Activated T-helper 2 cell treated with anti-CD3 and anti-CD28 coated beads, Interferon-gamma antibody, Interleukin-2, Interleukin-4, amounts not matched to agents 10 μg/mL and 5 μg/mL and 100 μg/mL, durations not matched to agents 14 hours and 24 hours and 36 hours (primary cell): ENCODE measurements at regions of chr9 and their contacts with region 1.

Region 1: GRCh38 chr9:4832786-4833579 is 40.2 kb downstream of the RCL1 start:
- DNase-seq: peak; percentile 27
- H3K4me3 Mint-ChIP-seq: no peak overlapping the region
- H3K27ac Mint-ChIP-seq: peak overlapping the region; percentile 93
- H3K4me1 Mint-ChIP-seq: peaks cover 47% of the 10 kb centered on the region
- H3K27me3 Mint-ChIP-seq: no peaks in the 10 kb centered on the region

Region 2: DNA sequence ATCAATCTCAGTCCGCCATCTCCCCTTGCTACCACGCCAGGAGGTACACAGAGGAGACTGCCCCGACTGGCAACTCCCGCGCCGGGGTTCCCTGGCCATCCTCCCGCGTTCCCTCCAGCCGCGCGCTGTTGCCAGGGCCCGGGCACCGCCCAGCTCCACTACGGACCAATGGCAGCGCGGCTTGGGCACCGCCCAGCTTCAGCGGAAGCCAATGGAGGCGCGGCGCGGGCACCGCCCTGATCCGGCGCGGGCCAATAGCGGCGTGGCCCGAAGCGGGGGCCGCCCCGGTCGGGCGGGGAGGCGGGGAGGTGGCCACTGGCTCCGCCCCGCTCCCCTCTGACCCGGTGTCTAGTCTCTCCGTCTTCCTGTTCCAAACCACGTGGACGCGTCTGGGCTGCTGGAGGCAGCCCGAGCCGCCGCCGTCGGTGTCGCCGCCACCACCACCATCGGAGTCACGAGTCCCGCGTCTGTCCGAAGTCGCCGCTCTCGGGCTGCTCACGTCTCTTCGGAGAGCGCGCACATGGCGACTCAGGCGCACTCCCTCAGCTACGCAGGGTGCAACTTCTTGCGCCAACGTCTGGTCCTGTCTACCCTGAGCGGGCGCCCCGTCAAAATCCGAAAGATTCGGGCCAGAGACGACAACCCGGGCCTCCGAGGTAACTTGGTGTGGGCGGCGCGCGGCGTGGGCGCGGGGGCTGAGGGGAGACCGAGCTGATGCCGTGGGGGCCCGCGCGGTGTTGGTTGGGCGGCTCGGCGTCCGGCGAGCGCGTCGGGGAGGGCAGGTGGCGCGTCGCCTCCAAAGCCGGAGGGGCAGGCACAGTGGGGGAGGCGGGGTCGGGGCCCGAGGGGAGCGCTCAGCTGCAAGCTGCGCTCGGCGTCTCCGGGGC is 40.2 kb before region 1 on chr9 and contains the start of gene RCL1:
- intact Hi-C with region 1: loop called (anchors 1 kb)
- DNase-seq: peak; percentile 97
- H3K4me3 Mint-ChIP-seq: peak within 1 kb of the TSS; percentile 93
- H3K27ac Mint-ChIP-seq: peak within 1 kb of the TSS; percentile 90
- H3K4me1 Mint-ChIP-seq: peaks cover 40% of the 10 kb centered on the region
- H3K27me3 Mint-ChIP-seq: peaks cover 2% of the 10 kb centered on the region
- total RNA-seq, gene RCL1: 34.5 and 36.3 TPM in 2 replicates

Region 3: GRCh38 chr9:4873066-4873465 is 40.1 kb after region 1 on chr9:
- intact Hi-C with region 1: no loop called
- DNase-seq: no peak
- H3K4me3 Mint-ChIP-seq: no peak overlapping the region
- H3K27ac Mint-ChIP-seq: no peak overlapping the region
- H3K4me1 Mint-ChIP-seq: peaks cover 14% of the 10 kb centered on the region
- H3K27me3 Mint-ChIP-seq: no peaks in the 10 kb centered on the region

Region 4: GRCh38 chr9:4923580-4924544 is 90.9 kb after region 1 on chr9:
- intact Hi-C with region 1: loop called (anchors 5 kb)
- DNase-seq: no peak
- H3K4me3 Mint-ChIP-seq: no peak overlapping the region
- H3K27ac Mint-ChIP-seq: peak overlapping the region; percentile 83
- H3K4me1 Mint-ChIP-seq: peaks cover 48% of the 10 kb centered on the region
- H3K27me3 Mint-ChIP-seq: no peaks in the 10 kb centered on the region

Region 5: DNA sequence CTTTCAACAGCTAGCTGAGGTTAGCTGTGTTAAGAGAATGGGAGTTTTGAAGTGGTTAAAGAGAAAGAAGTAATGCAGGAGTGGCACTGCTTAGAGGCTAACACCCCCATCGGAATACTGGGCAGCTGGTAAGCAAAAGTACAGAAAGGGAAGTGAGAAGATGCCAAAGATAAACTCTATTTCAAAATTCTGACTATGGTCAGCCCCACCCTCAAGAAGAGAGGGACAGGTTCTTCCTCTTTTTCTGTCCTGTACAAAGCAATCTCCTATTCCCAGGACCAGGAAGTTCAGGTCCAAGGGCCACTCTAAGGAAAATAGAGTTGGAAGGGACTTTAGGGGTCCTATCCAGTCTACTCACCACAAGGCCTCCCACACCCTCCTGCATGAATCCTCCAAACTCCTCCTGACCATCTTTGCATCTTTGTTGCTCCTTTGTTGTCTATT is 106.2 kb after region 1 on chr9:
- intact Hi-C with region 1: loop called (anchors 2 kb)
- DNase-seq: peak; percentile 39
- H3K4me3 Mint-ChIP-seq: peak overlapping the region; percentile 14
- H3K27ac Mint-ChIP-seq: peak overlapping the region; percentile 90
- H3K4me1 Mint-ChIP-seq: peaks cover 65% of the 10 kb centered on the region
- H3K27me3 Mint-ChIP-seq: no peaks in the 10 kb centered on the region